ENCODE measurements at regions of chr13 and their contacts with region 1.

Region 1: DNA sequence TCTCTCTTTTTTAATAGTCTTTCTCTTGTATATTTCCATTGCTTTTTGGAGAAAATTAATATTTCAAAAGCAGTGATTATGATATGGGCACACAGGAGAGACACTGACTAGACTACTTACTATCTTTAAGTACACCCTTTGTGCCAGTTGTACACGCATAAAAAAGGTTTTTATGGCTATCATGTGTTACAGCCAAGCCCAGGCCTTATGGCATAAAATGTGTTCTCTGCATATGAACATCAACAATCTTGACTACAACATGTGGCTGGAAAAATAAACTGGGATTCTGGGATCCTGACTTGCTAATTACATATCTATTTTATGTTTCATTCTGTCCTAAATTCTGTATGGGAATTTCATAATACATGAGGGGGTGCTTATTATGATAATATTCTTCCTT is 1401.8 kb downstream of the SLITRK5 start:
- DNase-seq: no peak
- ATAC-seq: no peak
- H3K4me3 ChIP-seq: no peak overlapping the region
- H3K4me3 Mint-ChIP-seq: no peak overlapping the region
- H3K27ac ChIP-seq: no peak overlapping the region
- H3K27ac Mint-ChIP-seq: no peak overlapping the region
- H3K4me1 ChIP-seq: no peaks in the 10 kb centered on the region
- H3K4me1 Mint-ChIP-seq: no peaks in the 10 kb centered on the region
- H3K27me3 ChIP-seq: no peaks in the 10 kb centered on the region
- H3K27me3 Mint-ChIP-seq: peaks cover 0 to 12% of the 10 kb centered on the region in 2 donors
- CTCF ChIP-seq: no peak

Region 2: GRCh38 chr13:87590518-87590917 is 1482.5 kb before region 1 on chr13:
- intact Hi-C with region 1: loop called (anchors 5 kb)
- DNase-seq: no peak
- ATAC-seq: no peak
- H3K4me3 ChIP-seq: no peak overlapping the region
- H3K4me3 Mint-ChIP-seq: no peak overlapping the region
- H3K27ac ChIP-seq: no peak overlapping the region
- H3K27ac Mint-ChIP-seq: no peak overlapping the region
- H3K4me1 ChIP-seq: no peaks in the 10 kb centered on the region
- H3K4me1 Mint-ChIP-seq: no peaks in the 10 kb centered on the region
- H3K27me3 ChIP-seq: no peaks in the 10 kb centered on the region
- H3K27me3 Mint-ChIP-seq: no peaks in the 10 kb centered on the region
- CTCF ChIP-seq: no peak

Measured in natural killer cell (primary cell).